Tibial artery (tissue), 4 donors: ENCODE measurements at regions of chr3 and their contacts with region 1.

Region 1: GRCh38 chr3:46695177-46695961 is 1.9 kb upstream of the ALS2CL start:
- DNase-seq: peak; percentile 80 to 86
- H3K4me3 ChIP-seq: no peak overlapping the region
- H3K27ac ChIP-seq: peak overlapping the region; percentile 94 to 97
- H3K4me1 ChIP-seq: peaks cover 8 to 79% (median 71%) of the 10 kb centered on the region in 4 donors
- H3K27me3 ChIP-seq: no peaks in the 10 kb centered on the region
- CTCF ChIP-seq: no peak

Region 2: GRCh38 chr3:45986303-45986982 is 708.9 kb before region 1 on chr3:
- intact Hi-C with region 1: loop called (anchors 10 kb)
- DNase-seq: peak; percentile 51 to 82
- H3K4me3 ChIP-seq: no peak overlapping the region
- H3K27ac ChIP-seq: peak overlapping the region; percentile 99
- H3K4me1 ChIP-seq: peaks cover 0 to 91% (median 77%) of the 10 kb centered on the region in 4 donors
- H3K27me3 ChIP-seq: no peaks in the 10 kb centered on the region
- CTCF ChIP-seq: no peak

Region 3: GRCh38 chr3:46759239-46760167 is 64.1 kb after region 1 on chr3:
- intact Hi-C with region 1: no loop called
- DNase-seq: no peak
- H3K4me3 ChIP-seq: no peak overlapping the region
- H3K27ac ChIP-seq: no peak overlapping the region
- H3K4me1 ChIP-seq: no peaks in the 10 kb centered on the region
- H3K27me3 ChIP-seq: no peaks in the 10 kb centered on the region
- CTCF ChIP-seq: no peak